GM10248 (cell line): ENCODE measurements at regions of chr5 and their contacts with region 1.

Region 1: DNA sequence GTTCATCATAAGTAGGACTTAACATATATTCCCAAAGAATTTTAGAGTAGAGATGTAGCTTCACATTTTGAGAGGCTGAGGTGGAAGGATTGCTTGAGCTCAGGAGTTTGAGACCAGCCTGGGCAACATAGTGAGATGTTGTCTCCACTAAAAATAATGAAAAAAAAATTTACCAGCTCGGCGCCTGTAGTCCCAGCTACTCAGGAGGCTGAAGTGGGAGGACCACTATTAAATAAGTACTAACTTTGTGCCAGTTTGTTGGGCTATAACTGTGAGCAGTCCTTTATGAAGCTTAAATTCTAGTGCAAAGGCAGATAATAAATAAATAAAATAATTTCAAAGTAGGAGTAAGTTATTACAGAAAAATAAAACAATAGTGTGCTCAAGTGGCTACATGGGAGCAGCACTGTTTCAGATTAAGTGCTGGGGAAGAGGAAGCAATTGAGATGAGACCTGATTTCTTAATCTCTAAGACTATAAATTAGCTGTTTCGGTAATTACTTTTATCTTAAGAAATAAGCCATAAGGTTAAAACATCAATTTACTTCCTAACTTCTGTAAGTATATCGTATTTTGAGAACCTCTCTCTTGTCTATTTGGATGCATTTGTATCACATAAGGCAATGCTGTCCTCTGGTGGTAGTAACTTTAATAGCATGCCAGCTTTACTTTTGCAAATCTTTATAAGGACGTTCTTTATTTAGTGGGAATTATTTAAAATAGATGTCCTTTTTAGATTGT is 98.9 kb downstream of the CSNK1G3 start:
- DNase-seq: peak; percentile 25
- CTCF ChIP-seq: peak; percentile 81

Region 2: GRCh38 chr5:123371575-123372179 is 239.2 kb before region 1 on chr5:
- CTCF ChIA-PET with region 1: interaction called, 11 read pairs
- POLR2A ChIA-PET with region 1: no interaction called
- DNase-seq: no peak
- CTCF ChIP-seq: peak; percentile 31

Region 3: GRCh38 chr5:123448017-123448617 is 162.7 kb before region 1 on chr5:
- CTCF ChIA-PET with region 1: no interaction called
- POLR2A ChIA-PET with region 1: no interaction called
- DNase-seq: peak; percentile 38
- CTCF ChIP-seq: no peak

Region 4: GRCh38 chr5:123594434-123594833 is 16.4 kb before region 1 on chr5:
- CTCF ChIA-PET with region 1: interaction called, 10 read pairs
- POLR2A ChIA-PET with region 1: no interaction called
- DNase-seq: no peak
- CTCF ChIP-seq: no peak